WTC11 (cell line): ENCODE measurements at regions of chr12 and their contacts with region 1.

Region 1: GRCh38 chr12:129911428-129912049 is 7.7 kb upstream of the TMEM132D start:
- DNase-seq: peak; percentile 24
- ATAC-seq: peak; percentile 78
- H3K4me3 Mint-ChIP-seq: no peak overlapping the region
- H3K27ac Mint-ChIP-seq: no peak overlapping the region
- H3K4me1 Mint-ChIP-seq: no peaks in the 10 kb centered on the region
- H3K27me3 Mint-ChIP-seq: peaks cover 37% of the 10 kb centered on the region
- CTCF ChIP-seq: peak; percentile 38; the same call in 1 of the 2 replicates

Region 2: DNA sequence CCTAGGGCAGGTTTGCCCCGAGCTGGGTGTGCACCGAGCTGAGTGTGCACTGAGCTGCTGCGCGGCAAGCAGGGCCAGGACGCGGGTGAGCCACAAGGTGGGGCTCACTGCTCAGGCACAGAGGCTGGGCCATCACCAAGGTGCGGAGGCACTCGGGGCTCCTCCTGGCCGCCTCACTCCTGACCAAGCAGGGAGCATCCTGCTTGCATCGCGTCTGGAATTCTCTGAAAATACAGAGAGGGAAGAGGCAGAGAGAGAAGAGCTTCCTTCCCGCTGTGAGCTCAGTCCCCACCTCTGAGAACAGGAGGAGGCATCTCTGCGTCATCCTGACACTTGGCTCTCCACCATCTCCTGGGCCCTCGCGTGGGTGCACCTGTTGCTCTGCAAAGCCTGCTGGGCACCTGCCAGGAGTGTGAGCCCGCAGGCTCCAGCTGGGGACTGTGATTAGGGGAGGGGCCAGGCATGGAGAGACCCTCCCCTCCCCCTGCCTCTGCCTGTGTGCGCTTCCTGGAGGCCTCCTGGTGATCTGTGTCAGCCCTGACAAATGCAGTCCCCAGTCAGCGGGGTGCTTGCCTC is 942.0 kb before region 1 on chr12:
- CTCF ChIA-PET with region 1: interaction called, 17 read pairs
- POLR2A ChIA-PET with region 1: no interaction called
- DNase-seq: peak; percentile 36
- ATAC-seq: peak; percentile 90
- H3K4me3 Mint-ChIP-seq: peak overlapping the region; percentile 18
- H3K27ac Mint-ChIP-seq: no peak overlapping the region
- H3K4me1 Mint-ChIP-seq: no peaks in the 10 kb centered on the region
- H3K27me3 Mint-ChIP-seq: peaks cover 24% of the 10 kb centered on the region
- CTCF ChIP-seq: no peak

Region 3: GRCh38 chr12:129893691-129894090 is 17.8 kb before region 1 on chr12:
- CTCF ChIA-PET with region 1: no interaction called
- POLR2A ChIA-PET with region 1: no interaction called
- DNase-seq: no peak
- ATAC-seq: no peak
- H3K4me3 Mint-ChIP-seq: no peak overlapping the region
- H3K27ac Mint-ChIP-seq: no peak overlapping the region
- H3K4me1 Mint-ChIP-seq: no peaks in the 10 kb centered on the region
- H3K27me3 Mint-ChIP-seq: peaks cover 4% of the 10 kb centered on the region; the same call in 1 of the 2 replicates
- CTCF ChIP-seq: no peak

Region 4: DNA sequence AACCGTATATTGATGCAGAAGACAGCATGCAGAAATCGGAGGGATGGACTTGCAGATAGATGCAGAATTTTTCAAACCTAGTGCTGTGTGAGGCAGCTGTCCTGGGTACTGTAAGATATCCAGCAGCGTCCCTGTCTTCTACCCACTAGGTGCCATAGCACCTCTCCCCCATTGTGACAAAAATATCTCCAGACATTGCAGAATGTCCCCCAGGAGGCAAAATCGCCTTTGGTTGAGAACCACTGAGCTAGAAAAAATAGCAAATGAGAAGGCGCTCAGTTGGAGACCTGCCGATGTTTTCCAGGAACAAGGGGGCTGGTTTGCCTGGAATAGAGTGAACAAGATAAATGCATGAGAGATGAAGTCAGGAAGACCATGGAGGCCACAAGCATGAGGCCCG is 60.2 kb after region 1 on chr12:
- CTCF ChIA-PET with region 1: no interaction called
- POLR2A ChIA-PET with region 1: no interaction called
- DNase-seq: no peak
- ATAC-seq: no peak
- H3K4me3 Mint-ChIP-seq: no peak overlapping the region
- H3K27ac Mint-ChIP-seq: no peak overlapping the region
- H3K4me1 Mint-ChIP-seq: peaks cover under 1% of the 10 kb centered on the region; the same call in 1 of the 2 replicates
- H3K27me3 Mint-ChIP-seq: peaks cover 4% of the 10 kb centered on the region
- CTCF ChIP-seq: no peak